Aorta (tissue), 5 donors: ENCODE measurements at regions of chr16 and their contacts with region 1.

Region 1: GRCh38 chr16:83441517-83441916 is 366.3 kb upstream of the HSBP1 start:
- DNase-seq: no peak
- ATAC-seq: peak; percentile 29
- H3K4me3 ChIP-seq: no peak overlapping the region
- H3K27ac ChIP-seq: no peak overlapping the region
- H3K4me1 ChIP-seq: no peaks in the 10 kb centered on the region
- H3K27me3 ChIP-seq: no peaks in the 10 kb centered on the region

Region 2: DNA sequence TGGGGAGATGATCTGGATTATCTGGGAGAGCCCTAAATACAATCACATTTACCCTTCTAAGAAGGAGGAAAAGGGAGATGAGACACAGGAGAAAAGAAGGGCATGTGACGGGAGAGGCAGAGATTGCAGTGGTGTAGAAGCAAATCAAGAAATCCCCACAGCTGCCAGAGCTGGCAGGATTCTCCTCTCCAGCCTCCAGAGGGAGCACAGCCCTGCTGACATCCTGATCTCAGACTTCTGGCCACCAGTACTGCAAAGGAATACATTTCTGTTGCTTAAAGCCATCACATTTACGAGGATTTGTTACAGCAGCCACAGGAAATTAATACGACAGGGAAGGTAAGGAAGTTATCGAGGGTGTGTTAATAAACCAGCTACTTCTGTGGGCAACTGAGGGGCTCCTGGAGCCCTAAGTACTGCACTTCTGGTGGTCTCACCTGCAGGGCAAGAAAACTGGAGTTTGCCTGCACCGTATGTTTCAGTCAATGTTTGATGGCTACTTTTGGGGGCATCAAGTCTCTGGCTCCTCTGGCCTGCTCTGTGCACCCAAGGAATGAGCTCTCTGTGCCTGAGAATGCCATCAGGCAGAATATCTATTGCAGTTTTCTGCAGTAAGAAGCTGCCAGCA is 837.6 kb before region 1 on chr16:
- intact Hi-C with region 1: loop called (anchors 10 kb)
- DNase-seq: peak; percentile 60 to 78
- ATAC-seq: peak; percentile 51
- H3K4me3 ChIP-seq: no peak overlapping the region
- H3K27ac ChIP-seq: no peak overlapping the region
- H3K4me1 ChIP-seq: no peaks in the 10 kb centered on the region
- H3K27me3 ChIP-seq: no peaks in the 10 kb centered on the region

Region 3: DNA sequence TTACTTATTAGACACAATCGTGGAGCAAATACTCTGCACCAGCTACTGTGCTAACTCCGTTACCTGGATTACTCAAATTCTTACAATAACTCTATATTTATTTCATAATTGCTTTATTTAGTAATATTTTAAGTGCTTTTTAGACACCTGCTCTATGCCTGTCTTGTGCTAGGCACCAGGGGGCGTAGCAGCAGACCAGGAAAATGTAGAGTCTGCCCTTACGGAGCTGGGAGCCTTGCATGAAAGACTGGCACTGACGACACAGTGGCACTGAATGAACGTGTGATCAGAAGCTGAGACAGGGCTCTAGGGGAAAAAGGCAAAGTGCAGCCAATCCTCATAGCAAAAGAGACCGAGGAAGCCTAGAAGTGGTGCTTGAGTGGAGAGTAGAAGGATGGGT is 328.2 kb before region 1 on chr16:
- intact Hi-C with region 1: loop called in 1 of 2 experiments (anchors 10 kb)
- DNase-seq: no peak
- ATAC-seq: no peak
- H3K4me3 ChIP-seq: no peak overlapping the region
- H3K27ac ChIP-seq: no peak overlapping the region
- H3K4me1 ChIP-seq: peaks cover 0 to 4% of the 10 kb centered on the region in 2 donors
- H3K27me3 ChIP-seq: no peaks in the 10 kb centered on the region